Heart left ventricle (tissue), 16 donors: ENCODE measurements at regions of chr4 and their contacts with region 1.

Region 1: DNA sequence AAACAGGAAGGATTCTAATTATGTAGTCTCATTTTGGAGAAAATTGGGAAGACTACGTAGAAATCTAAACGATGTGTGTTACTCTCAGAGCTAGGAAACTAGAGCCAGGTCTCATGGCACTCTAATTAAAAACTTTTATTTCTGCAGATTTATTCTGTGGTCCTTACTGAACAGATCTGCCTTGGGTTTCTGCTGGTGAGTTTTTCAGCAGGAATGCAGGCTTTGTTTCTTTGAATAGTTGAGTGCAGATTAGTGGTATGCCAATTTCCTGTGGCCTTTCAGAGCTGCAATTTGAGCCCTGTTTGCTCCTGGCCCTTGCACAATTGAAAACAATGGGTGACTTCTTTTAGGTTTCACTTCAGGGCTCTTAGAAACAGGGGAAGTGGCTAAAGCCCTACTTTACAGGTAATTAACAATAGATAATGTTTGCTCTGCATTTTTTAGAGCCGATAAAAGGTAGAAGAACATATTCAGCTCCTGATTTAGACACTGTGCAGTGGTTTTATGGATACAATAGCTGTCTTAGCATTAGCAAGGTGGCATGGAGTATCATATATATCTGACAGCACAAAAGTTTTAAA is 21.8 kb downstream of the SPRY1 start:
- DNase-seq: no peak
- ATAC-seq: peak in 3 of 4 donors; percentile 72 to 83 (median 76)
- H3K4me3 ChIP-seq: no peak overlapping the region
- H3K27ac ChIP-seq: peak overlapping the region in 11 of 12 donors; percentile 28 to 66 (median 45)
- H3K4me1 ChIP-seq: peaks cover 0 to 29% (median 9%) of the 10 kb centered on the region in 12 donors
- H3K27me3 ChIP-seq: no peaks in the 10 kb centered on the region
- CTCF ChIP-seq: no peak
- POLR2A ChIP-seq: no peak

Region 2: DNA sequence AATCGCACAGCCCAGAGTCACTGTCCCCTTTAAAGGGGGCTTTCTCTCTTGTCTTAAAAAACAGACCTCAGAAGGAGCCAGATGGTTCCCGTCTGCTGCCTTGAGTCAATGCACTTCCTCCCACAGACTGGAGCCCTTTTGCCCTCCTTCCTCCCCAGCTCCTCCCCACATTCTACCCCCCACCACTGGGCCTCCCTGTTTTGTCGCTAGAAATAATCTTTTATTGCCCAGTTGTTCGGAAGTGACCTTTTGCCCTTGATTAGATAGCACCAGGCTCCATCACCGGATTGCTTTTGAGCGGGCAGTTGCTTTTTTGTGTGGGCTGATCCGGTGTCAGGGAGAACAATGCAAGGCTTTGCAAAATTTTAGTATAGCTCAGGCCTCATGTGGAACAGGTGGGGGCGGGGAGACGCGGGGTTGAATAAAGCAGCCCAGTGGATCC is 25.9 kb after region 1 on chr4:
- intact Hi-C with region 1: no loop called
- DNase-seq: peak in 4 of 5 donors; percentile 40 to 65 (median 54)
- ATAC-seq: peak; percentile 34 to 89 (median 86)
- H3K4me3 ChIP-seq: peak overlapping the region in 4 of 12 donors; percentile 4 to 34 (median 19)
- H3K27ac ChIP-seq: peak overlapping the region in 10 of 12 donors; percentile 8 to 73 (median 28)
- H3K4me1 ChIP-seq: peaks cover 0 to 22% (median 9%) of the 10 kb centered on the region in 12 donors
- H3K27me3 ChIP-seq: no peaks in the 10 kb centered on the region
- CTCF ChIP-seq: no peak
- POLR2A ChIP-seq: no peak

Region 3: GRCh38 chr4:123505095-123506010 is 86.9 kb after region 1 on chr4:
- intact Hi-C with region 1: loop called in 1 of 10 experiments (anchors 5 kb)
- DNase-seq: peak; percentile 51 to 73 (median 57)
- ATAC-seq: peak; percentile 38 to 86 (median 75)
- H3K4me3 ChIP-seq: peak overlapping the region; percentile 32 to 90 (median 66)
- H3K27ac ChIP-seq: peak overlapping the region; percentile 45 to 87 (median 74)
- H3K4me1 ChIP-seq: peaks cover 0 to 15% (median 0%) of the 10 kb centered on the region in 12 donors
- H3K27me3 ChIP-seq: peaks cover 0 to 2% (median 0%) of the 10 kb centered on the region in 9 donors
- CTCF ChIP-seq: no peak
- POLR2A ChIP-seq: no peak

Region 4: DNA sequence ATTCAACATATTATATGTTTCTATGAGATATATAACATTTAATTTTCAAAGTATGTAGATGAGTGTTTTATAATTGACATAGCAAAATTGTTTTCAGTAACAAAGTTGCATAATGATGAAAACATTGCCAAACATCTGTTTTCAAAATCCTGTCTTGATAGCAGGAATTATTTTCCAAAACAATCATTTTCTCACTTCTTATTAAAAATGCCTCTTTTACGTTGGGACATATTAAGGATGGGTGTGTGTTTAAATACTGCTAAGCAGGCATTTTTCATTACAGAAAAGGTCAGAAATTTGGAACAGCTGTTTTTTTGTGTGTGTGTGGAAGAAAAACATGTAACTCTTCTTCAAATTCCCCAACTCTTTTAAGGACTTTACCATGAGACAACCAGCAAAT is 430.2 kb after region 1 on chr4:
- intact Hi-C with region 1: no loop called
- DNase-seq: no peak
- ATAC-seq: peak in 2 of 4 donors; percentile 31 to 37
- H3K4me3 ChIP-seq: no peak overlapping the region
- H3K27ac ChIP-seq: peak overlapping the region in 7 of 12 donors; percentile 39 to 74 (median 49)
- H3K4me1 ChIP-seq: peaks cover 0 to 12% (median 0%) of the 10 kb centered on the region in 12 donors
- H3K27me3 ChIP-seq: no peaks in the 10 kb centered on the region
- CTCF ChIP-seq: no peak
- POLR2A ChIP-seq: no peak